Gastrocnemius medialis (tissue), 4 donors: ENCODE measurements at regions of chr1 and their contacts with region 1.

Region 1: GRCh38 chr1:93021539-93022134 is 57.4 kb upstream of the MTF2 start:
- DNase-seq: no peak
- ATAC-seq: peak in 1 of 2 donors; percentile 75
- H3K4me3 ChIP-seq: no peak overlapping the region
- H3K27ac ChIP-seq: no peak overlapping the region
- H3K4me1 ChIP-seq: no peaks in the 10 kb centered on the region
- H3K27me3 ChIP-seq: no peaks in the 10 kb centered on the region
- CTCF ChIP-seq: peak; percentile 45 to 76 (median 60)
- POLR2A ChIP-seq: no peak

Region 2: GRCh38 chr1:92804721-92805169 is 216.9 kb before region 1 on chr1:
- in situ Hi-C with region 1: no loop called
- intact Hi-C with region 1: no loop called
- DNase-seq: peak in 1 of 2 donors; percentile 5
- ATAC-seq: peak; percentile 72 to 77
- H3K4me3 ChIP-seq: no peak overlapping the region
- H3K27ac ChIP-seq: no peak overlapping the region
- H3K4me1 ChIP-seq: no peaks in the 10 kb centered on the region
- H3K27me3 ChIP-seq: no peaks in the 10 kb centered on the region
- CTCF ChIP-seq: no peak
- POLR2A ChIP-seq: no peak

Region 3: GRCh38 chr1:92843429-92844352 is 177.9 kb before region 1 on chr1:
- in situ Hi-C with region 1: no loop called
- intact Hi-C with region 1: no loop called
- DNase-seq: no peak
- ATAC-seq: no peak
- H3K4me3 ChIP-seq: no peak overlapping the region
- H3K27ac ChIP-seq: no peak overlapping the region
- H3K4me1 ChIP-seq: peaks cover 9 to 14% of the 10 kb centered on the region in 2 donors
- H3K27me3 ChIP-seq: no peaks in the 10 kb centered on the region
- CTCF ChIP-seq: no peak
- POLR2A ChIP-seq: no peak

Region 4: GRCh38 chr1:93061895-93062792 is 40.5 kb after region 1 on chr1:
- in situ Hi-C with region 1: no loop called
- intact Hi-C with region 1: loop called (anchors 5 kb)
- DNase-seq: no peak
- ATAC-seq: no peak
- H3K4me3 ChIP-seq: no peak overlapping the region
- H3K27ac ChIP-seq: no peak overlapping the region
- H3K4me1 ChIP-seq: no peaks in the 10 kb centered on the region
- H3K27me3 ChIP-seq: no peaks in the 10 kb centered on the region
- CTCF ChIP-seq: peak in 3 of 5 experiments; percentile 22 to 43 (median 28)
- POLR2A ChIP-seq: no peak

Region 5: GRCh38 chr1:93114391-93114790 is 92.8 kb after region 1 on chr1:
- in situ Hi-C with region 1: no loop called
- intact Hi-C with region 1: no loop called
- DNase-seq: no peak
- ATAC-seq: no peak
- H3K4me3 ChIP-seq: no peak overlapping the region
- H3K27ac ChIP-seq: no peak overlapping the region
- H3K4me1 ChIP-seq: peaks cover 21% of the 10 kb centered on the region in 2 donors
- H3K27me3 ChIP-seq: no peaks in the 10 kb centered on the region
- CTCF ChIP-seq: no peak
- POLR2A ChIP-seq: no peak